ENCODE measurements at regions of chr17 and their contacts with region 1.

Region 1: GRCh38 chr17:20226814-20227482 is 217.8 kb downstream of the SPECC1 start:
- DNase-seq: peak; percentile 74
- H3K4me3 Mint-ChIP-seq: no peak overlapping the region
- H3K27ac Mint-ChIP-seq: no peak overlapping the region
- H3K4me1 Mint-ChIP-seq: peaks cover 30% of the 10 kb centered on the region
- H3K27me3 Mint-ChIP-seq: peaks cover 1% of the 10 kb centered on the region

Region 2: GRCh38 chr17:20315821-20316220 is 88.9 kb after region 1 on chr17:
- intact Hi-C with region 1: loop called (anchors 1 kb)
- DNase-seq: no peak
- H3K4me3 Mint-ChIP-seq: no peak overlapping the region
- H3K27ac Mint-ChIP-seq: no peak overlapping the region
- H3K4me1 Mint-ChIP-seq: peaks cover under 1% of the 10 kb centered on the region
- H3K27me3 Mint-ChIP-seq: no peaks in the 10 kb centered on the region